Endothelial cell of umbilical vein (primary cell): ENCODE measurements at regions of chr7 and their contacts with region 1.

Region 1: DNA sequence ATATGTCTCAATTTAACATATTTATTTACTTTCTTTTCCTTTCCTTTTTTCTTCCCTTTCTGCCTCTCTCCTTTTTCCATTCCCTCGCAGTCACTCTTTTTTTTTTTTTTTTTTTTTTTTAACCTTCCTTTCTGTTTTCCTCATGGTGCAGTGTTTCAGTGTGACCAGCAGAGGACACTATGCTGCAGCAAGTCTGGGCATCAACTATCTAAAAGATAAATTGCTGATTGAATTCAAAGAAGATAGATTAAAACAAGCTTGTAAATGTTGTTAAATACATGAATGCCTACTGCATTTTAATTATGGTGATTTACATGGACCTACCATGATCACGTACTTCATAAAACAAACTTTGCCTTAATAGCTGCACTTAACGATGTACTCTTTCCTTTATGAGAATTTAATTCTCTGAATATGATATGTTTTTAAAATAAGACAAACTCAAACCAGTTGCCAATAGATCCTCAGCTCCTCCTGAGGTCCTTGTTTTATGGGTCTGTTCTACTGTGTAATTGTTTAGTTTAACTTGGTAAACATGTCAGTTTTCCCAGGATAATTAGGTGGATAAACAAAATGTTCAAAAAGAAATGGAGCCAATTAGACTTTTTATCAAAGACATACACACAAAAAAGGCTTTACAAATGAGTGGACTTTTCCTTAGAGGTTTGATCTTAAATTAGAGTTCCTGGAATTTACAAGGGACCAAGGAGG is 101.0 kb upstream of the AGR3 start:
- DNase-seq: peak; percentile 69
- H3K4me3 ChIP-seq: no peak overlapping the region
- H3K27ac ChIP-seq: no peak overlapping the region
- H3K4me1 ChIP-seq: peaks cover 26% of the 10 kb centered on the region
- H3K27me3 ChIP-seq: no peaks in the 10 kb centered on the region
- CTCF ChIP-seq: peak; percentile 75 to 76
- POLR2A ChIP-seq: no peak

Region 2: DNA sequence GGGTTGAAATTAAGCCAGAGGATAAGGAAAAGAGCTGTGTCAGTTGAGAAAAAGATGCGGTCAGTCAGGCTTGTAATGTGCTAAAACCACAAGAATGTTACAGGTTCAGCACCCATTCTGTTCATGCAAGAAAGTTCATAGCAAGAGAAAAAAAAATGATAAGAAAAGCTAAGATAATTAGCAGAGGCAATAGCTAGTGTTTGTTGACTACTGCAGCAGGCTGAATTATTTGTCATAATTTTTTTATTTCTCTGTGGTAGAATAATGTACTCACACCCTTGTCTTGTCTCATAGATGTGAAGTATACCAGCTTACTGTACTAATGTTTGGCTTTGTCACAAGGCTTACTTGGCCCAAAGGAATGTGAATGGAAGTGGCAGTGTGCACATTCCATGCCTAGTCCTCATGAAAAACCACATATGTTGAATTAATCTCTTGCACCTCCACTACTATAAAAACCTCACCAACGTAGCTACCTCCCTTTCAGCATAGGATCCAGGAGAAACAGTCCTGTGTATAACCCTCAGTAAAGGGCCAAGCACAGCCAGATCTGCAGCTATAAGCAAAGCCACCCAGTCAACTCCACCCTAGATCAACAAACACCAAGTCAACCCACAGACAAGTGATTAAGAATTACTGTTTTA is 636.3 kb before region 1 on chr7:
- CTCF ChIA-PET with region 1: no interaction called
- POLR2A ChIA-PET with region 1: no interaction called
- dilution Hi-C with region 1: no loop called
- intact Hi-C with region 1: no loop called
- DNase-seq: no peak
- H3K4me3 ChIP-seq: no peak overlapping the region
- H3K27ac ChIP-seq: no peak overlapping the region
- H3K4me1 ChIP-seq: no peaks in the 10 kb centered on the region
- H3K27me3 ChIP-seq: no peaks in the 10 kb centered on the region
- CTCF ChIP-seq: no peak
- POLR2A ChIP-seq: no peak

Region 3: DNA sequence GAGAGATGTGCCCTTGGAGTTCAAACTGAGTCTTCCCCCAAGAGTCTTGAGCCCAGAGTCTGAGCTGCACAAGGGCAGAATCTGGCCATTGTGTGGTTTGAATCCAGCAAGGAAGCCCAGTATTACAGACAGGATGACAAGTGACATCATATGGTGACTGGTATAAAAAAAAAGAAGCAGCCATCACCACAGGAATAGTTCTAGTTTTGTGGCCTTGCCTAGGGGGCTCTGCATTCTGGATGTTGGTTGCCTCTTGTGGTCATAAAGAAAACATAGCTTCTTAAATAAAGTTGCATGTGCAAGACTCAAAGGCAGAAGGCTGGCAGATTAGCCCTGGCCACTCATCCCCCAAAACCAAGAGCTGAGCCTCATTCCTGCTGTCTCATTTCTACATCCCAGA is 473.0 kb before region 1 on chr7:
- CTCF ChIA-PET with region 1: no interaction called
- POLR2A ChIA-PET with region 1: no interaction called
- dilution Hi-C with region 1: no loop called
- intact Hi-C with region 1: no loop called
- DNase-seq: no peak
- H3K4me3 ChIP-seq: no peak overlapping the region
- H3K27ac ChIP-seq: no peak overlapping the region
- H3K4me1 ChIP-seq: no peaks in the 10 kb centered on the region
- H3K27me3 ChIP-seq: no peaks in the 10 kb centered on the region
- CTCF ChIP-seq: no peak
- POLR2A ChIP-seq: no peak

Region 4: GRCh38 chr7:16712916-16713315 is 269.9 kb before region 1 on chr7:
- CTCF ChIA-PET with region 1: no interaction called
- POLR2A ChIA-PET with region 1: no interaction called
- dilution Hi-C with region 1: no loop called
- intact Hi-C with region 1: no loop called
- DNase-seq: no peak
- H3K4me3 ChIP-seq: no peak overlapping the region
- H3K27ac ChIP-seq: no peak overlapping the region
- H3K4me1 ChIP-seq: peaks cover 8% of the 10 kb centered on the region
- H3K27me3 ChIP-seq: no peaks in the 10 kb centered on the region
- CTCF ChIP-seq: no peak
- POLR2A ChIP-seq: no peak

Region 5: GRCh38 chr7:16822029-16822428 is 160.8 kb before region 1 on chr7:
- CTCF ChIA-PET with region 1: no interaction called
- POLR2A ChIA-PET with region 1: no interaction called
- dilution Hi-C with region 1: no loop called
- intact Hi-C with region 1: no loop called
- DNase-seq: peak; percentile 7
- H3K4me3 ChIP-seq: no peak overlapping the region
- H3K27ac ChIP-seq: no peak overlapping the region
- H3K4me1 ChIP-seq: no peaks in the 10 kb centered on the region
- H3K27me3 ChIP-seq: no peaks in the 10 kb centered on the region
- CTCF ChIP-seq: no peak
- POLR2A ChIP-seq: no peak

Region 6: GRCh38 chr7:16926283-16926682 is 56.5 kb before region 1 on chr7:
- CTCF ChIA-PET with region 1: interaction called, 29 read pairs
- POLR2A ChIA-PET with region 1: no interaction called
- dilution Hi-C with region 1: no loop called
- intact Hi-C with region 1: loop called (anchors 1 kb)
- DNase-seq: peak; percentile 68
- H3K4me3 ChIP-seq: no peak overlapping the region
- H3K27ac ChIP-seq: no peak overlapping the region
- H3K4me1 ChIP-seq: peaks cover 7% of the 10 kb centered on the region
- H3K27me3 ChIP-seq: no peaks in the 10 kb centered on the region
- CTCF ChIP-seq: peak; percentile 53 to 68
- POLR2A ChIP-seq: no peak

Region 7: DNA sequence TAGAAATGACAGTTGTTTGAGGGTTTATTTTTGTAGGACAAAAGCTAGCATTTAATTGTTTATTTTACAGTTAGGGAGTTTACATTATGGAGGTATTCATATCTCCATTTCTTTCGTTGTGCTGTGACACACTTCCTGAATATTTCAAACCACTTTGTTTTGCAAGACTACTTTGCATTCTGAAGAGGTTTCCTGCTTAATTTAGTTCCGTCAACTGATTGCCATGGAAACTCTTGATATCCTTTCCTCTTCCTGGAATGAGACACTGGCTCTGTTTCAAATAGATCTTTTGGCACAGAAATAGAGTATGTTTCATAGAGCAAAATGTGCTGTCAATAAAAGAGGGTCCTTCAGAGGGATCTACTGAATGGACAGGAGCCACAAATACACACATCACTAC is 58.5 kb after region 1 on chr7:
- CTCF ChIA-PET with region 1: interaction called, 9 read pairs
- POLR2A ChIA-PET with region 1: interaction called, 3 read pairs
- dilution Hi-C with region 1: no loop called
- intact Hi-C with region 1: loop called (anchors 1 kb)
- DNase-seq: peak; percentile 94
- H3K4me3 ChIP-seq: peak overlapping the region in 1 of 3 experiments; percentile 30
- H3K27ac ChIP-seq: peak overlapping the region; percentile 88
- H3K4me1 ChIP-seq: peaks cover 52% of the 10 kb centered on the region
- H3K27me3 ChIP-seq: no peaks in the 10 kb centered on the region
- CTCF ChIP-seq: no peak
- POLR2A ChIP-seq: no peak

Region 8: DNA sequence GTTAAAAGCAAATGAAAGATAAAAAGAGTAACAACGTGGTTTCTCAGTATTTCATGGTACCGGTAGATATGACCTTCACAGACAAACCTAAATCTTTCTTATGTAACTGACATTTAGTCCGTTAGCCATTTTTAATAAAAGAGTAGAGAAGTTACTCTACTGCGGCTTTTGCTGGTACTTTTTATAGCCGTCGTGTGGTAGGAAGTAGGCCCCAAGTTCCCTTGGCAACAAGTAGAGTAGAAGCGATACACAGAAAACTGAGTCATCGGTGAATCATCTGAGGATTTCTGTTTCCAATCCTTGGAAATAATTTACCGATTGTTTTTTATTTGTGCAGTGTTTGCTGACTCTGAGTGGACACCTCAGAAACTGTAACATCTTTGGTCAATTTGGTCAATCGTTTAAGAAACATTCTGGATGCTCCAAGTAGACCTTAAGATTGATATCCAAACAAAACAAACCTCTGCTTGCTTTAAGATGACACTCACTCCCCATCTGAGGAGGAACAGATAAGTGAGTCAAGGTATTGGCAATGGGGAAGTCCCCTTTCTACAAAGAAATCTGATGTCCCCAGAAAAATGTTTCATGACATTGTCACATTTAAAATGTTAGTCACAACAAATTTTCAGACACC is 251.7 kb after region 1 on chr7:
- CTCF ChIA-PET with region 1: interaction called, 3 read pairs
- POLR2A ChIA-PET with region 1: no interaction called
- dilution Hi-C with region 1: no loop called
- intact Hi-C with region 1: loop called (anchors 10 kb)
- DNase-seq: peak; percentile 90
- H3K4me3 ChIP-seq: no peak overlapping the region
- H3K27ac ChIP-seq: peak overlapping the region; percentile 76
- H3K4me1 ChIP-seq: peaks cover 28% of the 10 kb centered on the region
- H3K27me3 ChIP-seq: no peaks in the 10 kb centered on the region
- CTCF ChIP-seq: no peak
- POLR2A ChIP-seq: no peak

Region 9: DNA sequence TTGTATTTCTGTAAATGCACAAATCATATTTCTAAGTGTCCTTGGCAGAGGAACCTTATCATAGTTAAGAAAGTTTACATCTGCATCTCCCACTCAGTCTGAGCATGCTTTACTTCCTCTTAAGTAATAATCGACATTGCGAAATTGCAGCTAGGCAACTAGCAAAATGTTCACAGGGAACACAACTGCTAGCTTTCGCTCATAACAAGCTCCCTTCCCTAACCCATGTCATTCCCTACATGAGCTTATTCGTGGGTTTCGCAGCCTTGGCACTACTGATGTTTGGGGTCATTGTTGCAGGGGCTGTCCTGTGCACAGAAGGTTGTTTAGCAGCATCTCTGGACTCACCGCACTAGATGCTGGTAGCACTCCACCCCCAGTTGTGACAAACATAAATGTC is 387.3 kb after region 1 on chr7:
- CTCF ChIA-PET with region 1: interaction called, 3 read pairs
- POLR2A ChIA-PET with region 1: no interaction called
- dilution Hi-C with region 1: no loop called
- intact Hi-C with region 1: loop called (anchors 5 kb)
- DNase-seq: no peak
- H3K4me3 ChIP-seq: no peak overlapping the region
- H3K27ac ChIP-seq: no peak overlapping the region
- H3K4me1 ChIP-seq: peaks cover 23% of the 10 kb centered on the region
- H3K27me3 ChIP-seq: no peaks in the 10 kb centered on the region
- CTCF ChIP-seq: no peak
- POLR2A ChIP-seq: no peak

Region 10: GRCh38 chr7:17680943-17681351 is 698.2 kb after region 1 on chr7:
- CTCF ChIA-PET with region 1: interaction called, 24 read pairs
- POLR2A ChIA-PET with region 1: no interaction called
- dilution Hi-C with region 1: no loop called
- intact Hi-C with region 1: loop called (anchors 10 kb)
- DNase-seq: peak; percentile 31
- H3K4me3 ChIP-seq: no peak overlapping the region
- H3K27ac ChIP-seq: no peak overlapping the region
- H3K4me1 ChIP-seq: peaks cover 4% of the 10 kb centered on the region
- H3K27me3 ChIP-seq: no peaks in the 10 kb centered on the region
- CTCF ChIP-seq: peak in 1 of 2 donors; percentile 16
- POLR2A ChIP-seq: no peak